Activated CD4-positive, alpha-beta T cell treated with anti-CD3 and anti-CD28 coated beads, Interleukin-2, amount 10 ng/mL, durations not matched to agents 24 days and 14 days (primary cell): ENCODE measurements at regions of chr5 and their contacts with region 1.

Region 1: DNA sequence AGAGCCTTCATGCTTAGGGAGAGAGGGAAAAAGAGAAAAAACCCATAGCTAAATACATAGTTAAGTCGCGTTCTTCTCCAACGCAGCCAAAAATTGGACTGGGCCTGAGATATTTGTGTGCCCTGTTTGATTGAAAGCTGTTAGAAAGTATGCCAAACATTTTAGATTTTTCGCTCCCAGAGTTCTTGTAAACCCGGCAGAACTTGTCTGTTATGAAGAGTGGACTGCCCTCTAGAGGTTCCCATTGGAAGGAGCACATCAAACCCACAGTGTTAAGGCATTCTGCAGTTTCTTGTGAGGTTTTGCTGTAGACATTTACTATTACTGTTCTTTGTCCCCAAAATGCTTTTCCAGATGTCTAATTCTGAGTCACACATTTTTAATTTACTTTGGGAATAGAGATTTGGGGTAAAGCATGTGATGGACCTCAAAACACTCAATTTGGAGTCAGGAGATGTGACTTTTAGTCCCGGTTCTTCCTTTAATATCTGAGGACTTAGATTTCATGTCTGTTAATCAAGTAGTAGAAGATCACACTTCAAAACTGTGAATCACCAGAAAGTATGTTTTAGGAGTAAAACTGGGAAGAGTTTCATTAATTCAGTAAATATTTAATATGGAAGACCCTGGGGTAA is 96.6 kb downstream of the PCSK1 start:
- DNase-seq: peak; percentile 89
- H3K4me3 Mint-ChIP-seq: no peak overlapping the region
- H3K27ac Mint-ChIP-seq: no peak overlapping the region
- H3K4me1 Mint-ChIP-seq: peaks cover 13% of the 10 kb centered on the region
- H3K27me3 Mint-ChIP-seq: peaks cover 12% of the 10 kb centered on the region

Region 2: DNA sequence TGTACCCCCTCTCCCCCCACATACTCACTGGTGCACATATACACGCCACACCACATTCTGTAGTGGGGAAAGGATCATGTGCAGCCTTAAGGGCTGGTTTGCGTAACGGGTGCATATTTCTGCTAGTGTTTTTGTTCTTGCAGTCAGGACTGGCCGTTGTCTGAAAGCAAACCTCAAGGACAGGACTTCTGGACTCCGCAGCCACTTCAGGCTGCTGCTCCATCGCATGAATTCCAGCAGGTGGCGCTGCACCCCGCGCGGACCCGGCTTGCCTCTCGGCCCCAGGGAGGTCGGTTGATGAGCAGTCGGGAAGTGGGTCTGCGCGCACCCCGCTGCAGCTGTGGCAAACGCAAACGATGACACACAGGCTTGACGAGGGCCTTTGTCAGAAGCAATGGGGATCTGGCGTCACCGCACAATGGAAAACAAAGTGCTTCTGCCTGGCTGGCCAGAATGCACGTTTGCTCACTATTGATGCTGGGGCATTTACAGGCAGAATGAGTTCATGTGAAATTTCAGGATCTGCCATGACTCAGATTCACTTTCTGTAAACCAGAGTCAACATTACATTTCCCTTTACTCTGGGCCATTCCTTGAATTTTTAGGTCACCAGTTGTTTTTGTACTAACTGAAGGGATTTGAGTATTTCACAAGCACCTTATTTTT is 477.7 kb before region 1 on chr5:
- intact Hi-C with region 1: loop called (anchors 1 kb)
- DNase-seq: peak; percentile 96
- H3K4me3 Mint-ChIP-seq: peak overlapping the region; percentile 66
- H3K27ac Mint-ChIP-seq: peak overlapping the region; percentile 78
- H3K4me1 Mint-ChIP-seq: peaks cover 52% of the 10 kb centered on the region
- H3K27me3 Mint-ChIP-seq: no peaks in the 10 kb centered on the region

Region 3: GRCh38 chr5:96067894-96068614 is 268.4 kb before region 1 on chr5:
- intact Hi-C with region 1: loop called (anchors 5 kb)
- DNase-seq: peak; percentile 65
- H3K4me3 Mint-ChIP-seq: peak overlapping the region; percentile 40
- H3K27ac Mint-ChIP-seq: peak overlapping the region; percentile 90
- H3K4me1 Mint-ChIP-seq: peaks cover 59% of the 10 kb centered on the region
- H3K27me3 Mint-ChIP-seq: no peaks in the 10 kb centered on the region

Region 4: GRCh38 chr5:96226941-96227552 is 109.4 kb before region 1 on chr5:
- intact Hi-C with region 1: loop called (anchors 10 kb)
- DNase-seq: no peak
- H3K4me3 Mint-ChIP-seq: no peak overlapping the region
- H3K27ac Mint-ChIP-seq: no peak overlapping the region
- H3K4me1 Mint-ChIP-seq: no peaks in the 10 kb centered on the region
- H3K27me3 Mint-ChIP-seq: peaks cover 7% of the 10 kb centered on the region